Activated T-helper 1 cell treated with anti-CD3 and anti-CD28 coated beads, Interleukin-12 subunit alpha, Interleukin-12 subunit beta, Interleukin-2, Interleukin-4 antibody, amounts not matched to agents 30 ng/mL and 10 ng/mL and 1 ng/mL, durations not matched to agents 14 hours and 24 hours and 36 hours (primary cell): ENCODE measurements at regions of chr19 and their contacts with region 1.

Region 1: GRCh38 chr19:51108066-51108804 is at the start of gene CTU1:
- DNase-seq: peak; percentile 98
- H3K4me3 Mint-ChIP-seq: peak within 1 kb of the TSS; percentile 92
- H3K27ac Mint-ChIP-seq: peak within 1 kb of the TSS; percentile 96
- H3K4me1 Mint-ChIP-seq: peaks cover 24% of the 10 kb centered on the region
- H3K27me3 Mint-ChIP-seq: no peaks in the 10 kb centered on the region
- total RNA-seq, gene CTU1: 12.5 and 14.0 TPM in 2 replicates

Region 2: GRCh38 chr19:50511068-50511822 is 597.0 kb before region 1 on chr19 and contains the start of gene JOSD2:
- intact Hi-C with region 1: loop called (anchors 1 kb)
- DNase-seq: peak; percentile 97
- H3K4me3 Mint-ChIP-seq: peak within 1 kb of the TSS; percentile 96
- H3K27ac Mint-ChIP-seq: peak within 1 kb of the TSS; percentile 99
- H3K4me1 Mint-ChIP-seq: peaks cover 18% of the 10 kb centered on the region
- H3K27me3 Mint-ChIP-seq: peaks cover 10% of the 10 kb centered on the region
- total RNA-seq, gene JOSD2: 38.5 and 41.7 TPM in 2 replicates

Region 3: GRCh38 chr19:50804420-50805272 is 303.6 kb before region 1 on chr19:
- intact Hi-C with region 1: loop called (anchors 2 kb)
- DNase-seq: peak; percentile 97
- H3K4me3 Mint-ChIP-seq: peak overlapping the region; percentile 96
- H3K27ac Mint-ChIP-seq: peak overlapping the region; percentile 98
- H3K4me1 Mint-ChIP-seq: peaks cover 27% of the 10 kb centered on the region
- H3K27me3 Mint-ChIP-seq: no peaks in the 10 kb centered on the region

Region 4: GRCh38 chr19:51166846-51167490 is 58.7 kb after region 1 on chr19:
- intact Hi-C with region 1: loop called (anchors 2 kb)
- DNase-seq: peak; percentile 28
- H3K4me3 Mint-ChIP-seq: peak overlapping the region; percentile 68
- H3K27ac Mint-ChIP-seq: no peak overlapping the region
- H3K4me1 Mint-ChIP-seq: peaks cover 36% of the 10 kb centered on the region
- H3K27me3 Mint-ChIP-seq: peaks cover 20% of the 10 kb centered on the region

Region 5: GRCh38 chr19:51271067-51271466 is 162.8 kb after region 1 on chr19:
- intact Hi-C with region 1: no loop called
- DNase-seq: no peak
- H3K4me3 Mint-ChIP-seq: no peak overlapping the region
- H3K27ac Mint-ChIP-seq: no peak overlapping the region
- H3K4me1 Mint-ChIP-seq: peaks cover 8% of the 10 kb centered on the region
- H3K27me3 Mint-ChIP-seq: peaks cover 2% of the 10 kb centered on the region

Region 6: GRCh38 chr19:51570962-51571575 is 462.8 kb after region 1 on chr19 and contains the start of gene ZNF175:
- intact Hi-C with region 1: loop called (anchors 1 kb)
- DNase-seq: peak; percentile 62
- H3K4me3 Mint-ChIP-seq: peak within 1 kb of the TSS; percentile 99
- H3K27ac Mint-ChIP-seq: peak within 1 kb of the TSS; percentile 81
- H3K4me1 Mint-ChIP-seq: peaks cover 23% of the 10 kb centered on the region
- H3K27me3 Mint-ChIP-seq: peaks cover 14% of the 10 kb centered on the region
- total RNA-seq, gene ZNF175: 7.9 and 8.4 TPM in 2 replicates